GM18951 (cell line): ENCODE measurements at regions of chr11 and their contacts with region 1.

Region 1: DNA sequence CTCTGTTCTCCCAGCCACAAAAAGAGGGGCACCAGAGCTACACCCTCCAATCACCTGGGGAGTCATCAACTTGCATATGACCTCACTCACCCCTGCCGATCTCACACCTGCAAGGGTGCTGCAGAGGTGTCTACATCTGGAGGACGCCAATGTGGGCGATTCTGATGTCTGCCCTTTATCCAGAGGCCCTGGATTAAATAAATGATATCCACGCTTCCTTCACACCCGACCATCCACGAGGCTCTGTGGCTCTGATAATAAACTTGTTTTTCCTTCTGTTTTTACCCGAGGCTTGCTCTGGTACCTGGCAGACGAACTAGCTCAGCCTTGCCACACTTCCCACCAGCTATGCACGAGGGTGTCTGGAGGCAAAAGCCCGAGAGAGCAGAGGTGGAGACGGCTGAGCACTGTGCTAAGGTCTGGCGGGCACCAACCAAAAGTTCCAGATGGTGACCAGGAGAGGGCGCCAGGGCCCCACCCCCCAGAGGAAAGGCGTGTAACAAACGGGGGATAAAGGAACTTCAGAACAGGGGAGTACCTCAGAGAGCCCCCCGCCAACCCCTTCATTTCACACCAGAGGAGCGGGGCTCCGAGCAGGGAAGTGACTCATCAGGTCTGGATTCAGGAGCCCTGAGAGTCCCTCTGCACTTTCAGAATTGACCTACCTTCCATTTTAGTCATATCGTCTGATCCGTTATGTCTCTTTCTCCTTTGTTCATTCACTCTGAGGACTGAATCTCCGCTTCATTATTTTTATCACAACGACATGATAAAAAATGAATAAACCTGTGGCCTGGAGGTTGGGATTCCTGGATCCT is 13.5 kb downstream of the SCN3B start:
- POLR2A ChIP-seq: no peak

Region 2: GRCh38 chr11:123707606-123708205 is 66.8 kb after region 1 on chr11:
- in situ Hi-C with region 1: loop called (anchors 10 kb)
- POLR2A ChIP-seq: no peak